ENCODE measurements at regions of chr16 and their contacts with region 1.

Region 1: DNA sequence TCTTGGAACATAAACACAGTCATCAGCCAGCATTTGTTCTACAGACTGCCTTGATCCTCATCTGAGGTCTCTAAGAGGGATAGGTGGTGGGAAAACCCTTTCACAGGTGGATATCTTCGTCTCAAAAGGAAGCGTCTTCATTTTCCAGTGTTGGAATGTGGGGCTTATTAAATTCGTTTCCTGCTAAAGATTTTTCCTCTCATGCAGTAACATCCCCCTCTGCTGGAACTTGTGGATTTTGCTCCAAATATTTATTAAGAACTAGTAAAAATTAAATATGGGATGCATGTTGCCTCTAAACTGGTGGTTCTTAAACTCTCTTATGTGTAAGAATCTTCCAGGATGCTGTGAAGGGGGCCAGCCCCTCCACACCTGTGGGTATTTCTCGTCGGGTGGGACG is 20.1 kb upstream of the MLYCD start:
- DNase-seq: peak; percentile 66
- ATAC-seq: no peak
- H3K4me3 ChIP-seq: no peak overlapping the region
- H3K27ac ChIP-seq: no peak overlapping the region
- H3K4me1 ChIP-seq: no peaks in the 10 kb centered on the region
- H3K27me3 ChIP-seq: peaks cover 53% of the 10 kb centered on the region
- CTCF ChIP-seq: peak; percentile 67

Region 2: GRCh38 chr16:83826146-83826913 is 52.5 kb before region 1 on chr16:
- CTCF ChIA-PET with region 1: no interaction called
- POLR2A ChIA-PET with region 1: no interaction called
- intact Hi-C with region 1: loop called (anchors 1 kb)
- DNase-seq: peak; percentile 84
- ATAC-seq: peak; percentile 96
- H3K4me3 ChIP-seq: no peak overlapping the region
- H3K27ac ChIP-seq: no peak overlapping the region
- H3K4me1 ChIP-seq: 0 out of 2 replicates have a peak, but pooled peaks cover 4% of the 10 kb centered on the region
- H3K27me3 ChIP-seq: 0 out of 2 replicates have a peak, but pooled peaks cover 3% of the 10 kb centered on the region
- CTCF ChIP-seq: peak; percentile 87

Measured in PC-3 (cell line).